Colonic mucosa (tissue), 4 donors: ENCODE measurements at regions of chr10 and their contacts with region 1.

Region 1: GRCh38 chr10:122565728-122566206 is 5.2 kb downstream of the DMBT1 start:
- DNase-seq: peak; percentile 89
- H3K4me3 ChIP-seq: no peak overlapping the region
- H3K27ac ChIP-seq: no peak overlapping the region
- H3K4me1 ChIP-seq: no peaks in the 10 kb centered on the region
- H3K27me3 ChIP-seq: no peaks in the 10 kb centered on the region
- CTCF ChIP-seq: peak; percentile 62

Region 2: GRCh38 chr10:122298598-122299301 is 267.0 kb before region 1 on chr10:
- intact Hi-C with region 1: loop called (anchors 5 kb)
- DNase-seq: peak; percentile 83
- H3K4me3 ChIP-seq: no peak overlapping the region
- H3K27ac ChIP-seq: no peak overlapping the region
- H3K4me1 ChIP-seq: no peaks in the 10 kb centered on the region
- H3K27me3 ChIP-seq: no peaks in the 10 kb centered on the region
- CTCF ChIP-seq: peak; percentile 96

Region 3: GRCh38 chr10:122342293-122343134 is 223.3 kb before region 1 on chr10:
- intact Hi-C with region 1: loop called (anchors 10 kb)
- DNase-seq: peak; percentile 53
- H3K4me3 ChIP-seq: no peak overlapping the region
- H3K27ac ChIP-seq: no peak overlapping the region
- H3K4me1 ChIP-seq: peaks cover 4% of the 10 kb centered on the region
- H3K27me3 ChIP-seq: no peaks in the 10 kb centered on the region
- CTCF ChIP-seq: peak; percentile 67

Region 4: GRCh38 chr10:122435212-122435827 is 130.4 kb before region 1 on chr10:
- intact Hi-C with region 1: loop called (anchors 10 kb)
- DNase-seq: no peak
- H3K4me3 ChIP-seq: no peak overlapping the region
- H3K27ac ChIP-seq: no peak overlapping the region
- H3K4me1 ChIP-seq: no peaks in the 10 kb centered on the region
- H3K27me3 ChIP-seq: no peaks in the 10 kb centered on the region
- CTCF ChIP-seq: peak; percentile 58

Region 5: GRCh38 chr10:122515588-122516231 is 50.1 kb before region 1 on chr10:
- intact Hi-C with region 1: no loop called
- DNase-seq: no peak
- H3K4me3 ChIP-seq: no peak overlapping the region
- H3K27ac ChIP-seq: no peak overlapping the region
- H3K4me1 ChIP-seq: no peaks in the 10 kb centered on the region
- H3K27me3 ChIP-seq: no peaks in the 10 kb centered on the region
- CTCF ChIP-seq: no peak

Region 6: DNA sequence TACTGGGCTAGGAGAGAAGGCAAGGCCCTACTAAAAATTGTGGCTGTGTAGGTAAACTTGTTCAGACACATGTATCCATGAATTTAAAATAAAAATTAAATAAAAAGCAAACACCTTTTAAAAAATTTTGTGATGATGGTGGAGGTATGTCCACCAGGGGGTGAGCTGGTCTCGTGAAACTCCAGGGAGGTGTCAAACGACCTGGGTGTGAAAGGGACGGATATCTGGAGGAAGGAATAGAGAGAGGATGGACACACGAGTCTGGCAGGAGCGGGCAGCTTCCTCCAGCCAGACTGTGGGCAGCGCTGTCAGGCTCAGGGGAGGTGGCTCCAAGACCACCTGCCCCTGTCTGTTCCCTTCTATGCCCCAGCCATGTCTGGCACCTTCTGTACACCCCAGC is 40.0 kb before region 1 on chr10:
- intact Hi-C with region 1: loop called (anchors 2 kb)
- DNase-seq: peak; percentile 61
- H3K4me3 ChIP-seq: no peak overlapping the region
- H3K27ac ChIP-seq: no peak overlapping the region
- H3K4me1 ChIP-seq: no peaks in the 10 kb centered on the region
- H3K27me3 ChIP-seq: no peaks in the 10 kb centered on the region
- CTCF ChIP-seq: peak; percentile 33

Region 7: DNA sequence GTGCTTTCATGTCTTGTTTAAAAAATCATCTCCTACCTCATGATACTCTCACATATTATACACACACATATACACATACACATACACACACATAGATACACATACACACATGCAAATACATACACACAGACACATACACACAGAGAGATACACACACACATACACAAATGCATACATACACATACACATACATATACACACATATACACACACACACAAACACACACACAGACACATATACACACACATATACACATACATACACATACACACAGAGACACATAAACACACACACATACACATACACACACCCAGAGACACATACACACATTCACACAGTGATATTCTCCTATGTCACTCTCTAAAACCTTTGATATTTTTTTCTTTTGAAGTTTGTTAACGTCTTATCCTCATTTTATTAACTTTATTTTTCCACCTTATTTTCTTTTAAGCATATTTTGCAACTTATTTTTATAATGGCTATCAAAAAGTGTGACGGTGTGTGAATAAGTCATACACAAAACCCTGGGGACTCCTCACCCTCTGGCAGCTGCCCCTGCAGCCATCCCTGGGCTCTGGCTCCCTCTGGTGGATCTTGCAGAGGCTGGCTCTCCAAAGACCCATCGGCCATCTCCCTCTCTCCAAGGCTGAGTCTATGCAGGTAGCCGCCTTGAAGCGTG is 137.8 kb after region 1 on chr10:
- intact Hi-C with region 1: no loop called
- DNase-seq: peak; percentile 66
- H3K4me3 ChIP-seq: no peak overlapping the region
- H3K27ac ChIP-seq: no peak overlapping the region
- H3K4me1 ChIP-seq: no peaks in the 10 kb centered on the region
- H3K27me3 ChIP-seq: no peaks in the 10 kb centered on the region
- CTCF ChIP-seq: peak; percentile 63

Region 8: GRCh38 chr10:122882766-122883165 is 317.0 kb after region 1 on chr10:
- intact Hi-C with region 1: no loop called
- DNase-seq: no peak
- H3K4me3 ChIP-seq: no peak overlapping the region
- H3K27ac ChIP-seq: no peak overlapping the region
- H3K4me1 ChIP-seq: no peaks in the 10 kb centered on the region
- H3K27me3 ChIP-seq: no peaks in the 10 kb centered on the region
- CTCF ChIP-seq: no peak